ENCODE measurements at regions of chr22 and their contacts with region 1.

Region 1: DNA sequence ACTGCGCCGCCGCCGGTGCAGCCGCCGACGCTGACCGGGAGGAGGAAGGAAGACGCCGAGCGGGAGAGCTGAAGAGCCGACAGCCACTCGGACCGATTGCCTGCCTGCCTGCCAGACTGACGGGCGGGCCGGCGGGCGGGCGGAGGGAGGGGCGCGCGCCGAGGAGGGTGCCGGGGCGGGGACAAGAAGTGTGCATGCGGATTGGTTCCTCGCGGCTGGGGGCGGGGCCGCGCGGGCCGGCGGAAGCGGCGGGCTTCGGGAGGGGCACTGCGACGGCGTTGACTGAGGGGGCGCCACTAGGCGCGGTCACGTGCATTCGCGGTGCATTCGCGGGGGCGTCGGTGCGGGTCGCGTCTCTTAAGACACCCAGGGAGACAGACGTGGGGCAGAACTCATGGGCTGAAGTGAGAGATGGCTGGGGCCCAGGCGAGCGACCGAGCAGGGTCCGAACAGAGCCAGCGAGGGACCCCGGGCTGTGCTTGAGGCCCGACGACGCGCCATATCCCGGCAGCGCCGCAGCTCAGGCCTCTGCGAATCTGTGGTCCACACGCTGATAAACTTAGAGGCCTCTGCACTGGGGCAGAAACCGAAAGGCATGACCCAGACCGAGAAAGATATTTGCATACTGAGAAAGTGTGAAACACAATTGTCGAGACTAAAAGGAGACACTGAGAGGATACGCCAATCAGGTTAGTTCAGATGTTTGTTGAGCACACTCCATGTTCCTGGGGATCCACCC is at the start of gene MAPK1:
- DNase-seq: peak; percentile 85 to 97 (median 91)
- ATAC-seq: peak; percentile 95
- H3K4me3 ChIP-seq: peak within 1 kb of the TSS; percentile 65
- H3K4me3 Mint-ChIP-seq: peak within 1 kb of the TSS; percentile 98
- H3K27ac ChIP-seq: peak within 1 kb of the TSS; percentile 72 to 84
- H3K27ac Mint-ChIP-seq: peak within 1 kb of the TSS; percentile 92
- H3K4me1 ChIP-seq: peaks cover 37% of the 10 kb centered on the region
- H3K4me1 Mint-ChIP-seq: peaks cover 54% of the 10 kb centered on the region
- H3K27me3 ChIP-seq: no peaks in the 10 kb centered on the region
- H3K27me3 Mint-ChIP-seq: no peaks in the 10 kb centered on the region
- CTCF ChIP-seq: peak; percentile 52
- total RNA-seq, gene MAPK1: 39.4 to 44.0 TPM

Region 2: GRCh38 chr22:21735200-21736076 is 132.3 kb before region 1 on chr22 and contains the start of gene YPEL1:
- CTCF ChIA-PET with region 1: no interaction called
- POLR2A ChIA-PET with region 1: interaction called, 6 read pairs
- intact Hi-C with region 1: loop called in 1 of 2 experiments (anchors 2 kb)
- DNase-seq: peak; percentile 91 to 99 (median 96)
- ATAC-seq: peak; percentile 94
- H3K4me3 ChIP-seq: peak within 1 kb of the TSS; percentile 56
- H3K4me3 Mint-ChIP-seq: peak within 1 kb of the TSS; percentile 80
- H3K27ac ChIP-seq: peak within 1 kb of the TSS; percentile 57 to 59
- H3K27ac Mint-ChIP-seq: peak within 1 kb of the TSS; percentile 79
- H3K4me1 ChIP-seq: peaks cover 23% of the 10 kb centered on the region
- H3K4me1 Mint-ChIP-seq: peaks cover 14% of the 10 kb centered on the region
- H3K27me3 ChIP-seq: no peaks in the 10 kb centered on the region
- H3K27me3 Mint-ChIP-seq: no peaks in the 10 kb centered on the region
- CTCF ChIP-seq: no peak
- total RNA-seq, gene YPEL1: 2.3 to 2.6 TPM

Region 3: DNA sequence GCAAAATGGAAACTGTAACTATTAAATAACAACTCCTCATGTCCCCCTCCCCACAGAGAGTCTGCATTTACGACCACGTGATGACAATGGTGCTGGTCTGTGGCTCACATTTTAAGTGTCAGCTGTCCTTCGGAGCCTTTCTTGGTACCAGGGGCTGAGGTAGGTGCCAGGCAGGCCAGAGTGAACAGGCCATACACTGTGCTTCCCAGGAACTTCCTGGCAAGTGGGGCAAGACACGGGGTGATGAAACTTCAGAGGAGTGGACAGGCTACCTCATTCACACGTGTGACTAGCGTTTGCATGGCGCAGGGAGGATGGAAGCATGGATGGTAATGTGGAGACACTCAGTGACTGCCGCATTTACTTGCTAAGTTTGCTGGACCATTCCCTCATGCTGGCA is 121.7 kb before region 1 on chr22:
- CTCF ChIA-PET with region 1: no interaction called
- POLR2A ChIA-PET with region 1: no interaction called
- intact Hi-C with region 1: no loop called
- DNase-seq: no peak
- ATAC-seq: no peak
- H3K4me3 ChIP-seq: no peak overlapping the region
- H3K4me3 Mint-ChIP-seq: no peak overlapping the region
- H3K27ac ChIP-seq: no peak overlapping the region
- H3K27ac Mint-ChIP-seq: no peak overlapping the region
- H3K4me1 ChIP-seq: no peaks in the 10 kb centered on the region
- H3K4me1 Mint-ChIP-seq: no peaks in the 10 kb centered on the region
- H3K27me3 ChIP-seq: no peaks in the 10 kb centered on the region
- H3K27me3 Mint-ChIP-seq: no peaks in the 10 kb centered on the region
- CTCF ChIP-seq: no peak

Region 4: DNA sequence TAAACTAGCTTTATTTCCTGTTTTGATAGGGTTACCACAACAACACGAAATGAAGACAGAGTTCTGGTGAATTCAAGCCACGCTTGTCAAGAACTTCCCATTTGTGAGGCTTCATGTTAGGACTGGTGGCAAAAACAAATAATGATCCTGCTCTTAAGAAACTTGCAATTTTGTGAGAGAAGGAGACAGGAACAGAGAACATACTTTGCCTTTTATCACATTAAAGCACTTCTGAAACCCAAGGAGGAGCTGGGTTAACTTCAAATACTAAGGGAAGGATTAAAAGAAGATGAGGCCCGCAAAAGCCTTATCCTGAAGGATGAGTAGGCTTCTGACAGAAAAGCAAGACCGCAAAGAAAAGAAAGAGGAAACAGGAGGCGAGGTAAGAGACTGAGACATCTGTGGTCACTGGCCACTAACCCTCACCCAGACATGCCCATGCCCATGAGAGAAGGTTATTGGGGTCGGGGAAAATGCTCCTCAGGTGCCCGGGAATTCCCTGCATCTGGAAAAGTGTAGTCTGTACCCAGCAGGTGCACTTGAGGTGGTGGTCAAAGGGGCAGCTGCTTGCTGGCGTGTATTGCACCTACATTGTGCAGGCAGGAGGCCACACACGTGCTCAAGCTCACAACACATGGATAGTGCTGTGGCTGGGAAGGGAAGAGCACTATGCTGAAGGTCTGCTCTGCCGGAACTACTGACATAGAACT is 50.8 kb before region 1 on chr22:
- CTCF ChIA-PET with region 1: no interaction called
- POLR2A ChIA-PET with region 1: interaction called, 3 read pairs
- intact Hi-C with region 1: loop called (anchors 1 to 2 kb)
- DNase-seq: peak in 9 of 14 experiments; percentile 7 to 90 (median 24)
- ATAC-seq: peak; percentile 92
- H3K4me3 ChIP-seq: peak overlapping the region; percentile 8
- H3K4me3 Mint-ChIP-seq: peak overlapping the region; percentile 69
- H3K27ac ChIP-seq: peak overlapping the region; percentile 58 to 92
- H3K27ac Mint-ChIP-seq: peak overlapping the region; percentile 89
- H3K4me1 ChIP-seq: peaks cover 48% of the 10 kb centered on the region
- H3K4me1 Mint-ChIP-seq: peaks cover 68% of the 10 kb centered on the region
- H3K27me3 ChIP-seq: no peaks in the 10 kb centered on the region
- H3K27me3 Mint-ChIP-seq: no peaks in the 10 kb centered on the region
- CTCF ChIP-seq: no peak

Region 5: DNA sequence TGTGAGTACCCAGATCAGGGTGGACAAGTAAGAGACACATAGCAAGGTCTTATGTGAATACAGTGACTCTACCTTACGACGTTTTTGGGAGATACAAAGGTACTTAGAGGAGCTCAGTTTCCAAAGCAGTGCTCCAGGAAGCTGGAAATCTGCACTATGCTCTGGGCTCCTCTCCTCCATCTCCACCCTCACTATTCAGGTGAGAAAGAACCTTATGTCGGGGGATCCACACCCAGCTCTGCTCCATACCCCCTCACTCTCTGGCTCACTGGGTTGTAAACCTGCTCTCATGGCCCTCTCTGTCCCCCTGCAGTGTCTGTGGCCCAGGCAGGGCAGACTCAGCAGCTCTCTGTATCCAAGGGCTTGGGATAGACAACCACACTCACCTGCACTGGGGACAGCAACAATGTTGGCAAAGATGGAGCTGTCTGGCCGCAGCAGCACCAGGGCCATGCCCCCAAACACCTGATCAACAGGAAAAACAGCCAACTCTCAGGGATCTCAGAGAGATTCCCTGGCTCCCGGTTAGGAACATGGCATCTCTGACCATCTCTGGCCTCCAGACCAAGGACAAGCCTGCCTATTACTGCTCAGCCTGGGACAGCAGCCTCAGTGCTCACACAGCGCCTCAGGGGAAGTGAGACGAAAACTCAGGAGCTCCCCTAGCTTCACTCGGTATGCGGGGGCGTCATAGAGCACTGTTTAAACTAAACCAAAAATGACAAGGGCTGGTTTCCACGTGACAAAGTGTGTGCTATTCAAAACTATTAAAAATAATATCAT is 175.8 kb after region 1 on chr22:
- CTCF ChIA-PET with region 1: no interaction called
- POLR2A ChIA-PET with region 1: no interaction called
- intact Hi-C with region 1: no loop called
- DNase-seq: no peak
- ATAC-seq: no peak
- H3K4me3 ChIP-seq: no peak overlapping the region
- H3K4me3 Mint-ChIP-seq: no peak overlapping the region
- H3K27ac ChIP-seq: no peak overlapping the region
- H3K27ac Mint-ChIP-seq: no peak overlapping the region
- H3K4me1 ChIP-seq: no peaks in the 10 kb centered on the region
- H3K4me1 Mint-ChIP-seq: no peaks in the 10 kb centered on the region
- H3K27me3 ChIP-seq: peaks cover 4 to 7% of the 10 kb centered on the region in 2 experiments
- H3K27me3 Mint-ChIP-seq: peaks cover 26% of the 10 kb centered on the region
- CTCF ChIP-seq: no peak